ENCODE measurements at regions of chr3 and their contacts with region 1.

Region 1: DNA sequence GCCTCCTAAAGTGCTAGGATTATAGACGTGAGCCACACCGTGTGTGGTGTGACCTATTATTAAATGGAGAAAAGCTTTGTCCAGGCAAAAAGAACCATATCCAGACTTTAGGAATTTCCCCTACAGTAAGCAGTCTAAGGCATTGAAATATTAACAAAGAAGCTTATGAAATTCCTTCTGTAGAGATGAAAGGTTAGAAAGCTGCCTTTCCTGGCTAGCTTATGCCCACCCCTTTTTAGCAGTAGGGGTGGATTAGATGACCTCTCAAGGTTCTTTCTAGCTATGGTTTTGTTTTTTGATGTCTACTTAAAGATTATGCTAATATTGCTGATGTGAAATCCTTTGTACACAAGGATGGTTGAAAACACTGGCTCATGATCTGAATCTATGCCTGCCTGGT is 13.9 kb downstream of the OXSM start:
- DNase-seq: no peak
- ATAC-seq: no peak

Region 2: DNA sequence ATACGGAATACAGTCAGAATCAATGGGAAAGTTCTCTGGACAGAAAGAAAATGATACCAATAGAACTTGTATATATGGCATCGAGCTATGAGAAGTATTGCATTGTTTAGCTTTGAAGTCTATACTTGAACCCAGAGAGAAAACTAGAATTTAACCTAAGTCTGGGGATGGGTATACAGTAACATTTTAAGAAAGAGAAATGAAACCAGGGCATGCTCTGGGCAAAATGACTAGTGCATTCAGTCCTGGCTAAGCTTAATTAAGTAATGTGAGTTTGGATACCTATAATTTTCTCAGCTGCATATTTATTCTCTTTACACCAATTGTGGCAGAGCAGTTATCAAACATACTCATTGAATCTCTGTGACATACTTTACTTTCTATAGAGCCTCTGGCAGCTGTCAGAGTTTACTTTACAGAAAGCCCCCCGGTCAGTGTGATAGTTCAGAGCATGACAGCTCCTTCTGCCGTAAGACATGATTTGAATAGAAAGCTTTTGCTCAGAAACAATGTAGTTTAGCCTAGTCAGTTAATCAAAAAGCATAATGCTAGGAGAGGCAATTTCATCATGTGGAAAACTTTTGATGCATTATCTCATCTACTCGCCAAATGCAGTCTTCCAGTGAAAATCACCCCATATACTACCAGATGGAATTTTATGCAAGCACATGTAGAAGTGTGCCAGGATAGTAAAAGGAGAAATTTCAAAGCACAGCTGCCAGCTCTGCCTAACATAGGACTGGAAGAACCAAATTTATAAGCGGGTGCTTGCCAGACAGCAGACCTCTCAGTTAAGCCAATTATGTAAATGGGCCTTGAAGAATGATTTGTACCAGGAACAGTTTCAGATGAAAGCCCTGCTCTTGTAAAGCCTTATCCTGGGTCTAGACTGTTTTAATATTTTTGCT is 26.8 kb after region 1 on chr3:
- intact Hi-C with region 1: loop called (anchors 1 kb)
- DNase-seq: no peak
- ATAC-seq: no peak

Measured in sciatic nerve (tissue), 2 donors.